ENCODE measurements at regions of chr2 and their contacts with region 1.

Region 1: GRCh38 chr2:177239932-177240630 is 24.4 kb downstream of the NFE2L2 start:
- DNase-seq: peak; percentile 28
- H3K4me3 Mint-ChIP-seq: peak overlapping the region; percentile 30
- H3K27ac Mint-ChIP-seq: peak overlapping the region; percentile 97
- H3K4me1 Mint-ChIP-seq: peaks cover 53% of the 10 kb centered on the region
- H3K27me3 Mint-ChIP-seq: no peaks in the 10 kb centered on the region
- CTCF ChIP-seq: no peak

Region 2: DNA sequence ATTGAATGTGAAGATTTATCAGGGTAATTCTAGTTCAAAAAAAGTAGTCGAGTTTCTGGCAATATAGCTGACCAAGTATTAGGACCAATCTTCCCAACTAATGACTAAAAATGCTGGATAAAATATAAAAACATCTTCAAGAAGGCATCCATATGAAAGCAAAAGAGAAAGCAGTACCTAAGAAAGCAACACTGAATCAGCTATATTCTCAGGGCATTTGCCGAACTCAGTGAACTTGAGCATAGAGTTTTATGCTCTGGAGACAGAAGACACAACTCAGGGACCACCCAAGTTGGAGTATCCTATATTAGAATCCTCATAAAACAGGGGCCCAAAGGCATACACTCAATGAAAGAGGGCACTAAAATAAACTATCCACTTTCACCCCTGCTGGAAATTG is 131.2 kb before region 1 on chr2:
- CTCF ChIA-PET with region 1: no interaction called
- POLR2A ChIA-PET with region 1: no interaction called
- intact Hi-C with region 1: no loop called
- DNase-seq: no peak
- H3K4me3 Mint-ChIP-seq: no peak overlapping the region
- H3K27ac Mint-ChIP-seq: no peak overlapping the region
- H3K4me1 Mint-ChIP-seq: no peaks in the 10 kb centered on the region
- H3K27me3 Mint-ChIP-seq: peaks cover 58% of the 10 kb centered on the region
- CTCF ChIP-seq: no peak

Region 3: GRCh38 chr2:177229448-177230242 is 10.4 kb before region 1 on chr2:
- CTCF ChIA-PET with region 1: interaction called, 3 read pairs
- POLR2A ChIA-PET with region 1: interaction called, 68 read pairs
- intact Hi-C with region 1: no loop called
- DNase-seq: no peak
- H3K4me3 Mint-ChIP-seq: no peak overlapping the region
- H3K27ac Mint-ChIP-seq: peak overlapping the region; percentile 35
- H3K4me1 Mint-ChIP-seq: peaks cover 21% of the 10 kb centered on the region
- H3K27me3 Mint-ChIP-seq: no peaks in the 10 kb centered on the region
- CTCF ChIP-seq: no peak

Region 4: DNA sequence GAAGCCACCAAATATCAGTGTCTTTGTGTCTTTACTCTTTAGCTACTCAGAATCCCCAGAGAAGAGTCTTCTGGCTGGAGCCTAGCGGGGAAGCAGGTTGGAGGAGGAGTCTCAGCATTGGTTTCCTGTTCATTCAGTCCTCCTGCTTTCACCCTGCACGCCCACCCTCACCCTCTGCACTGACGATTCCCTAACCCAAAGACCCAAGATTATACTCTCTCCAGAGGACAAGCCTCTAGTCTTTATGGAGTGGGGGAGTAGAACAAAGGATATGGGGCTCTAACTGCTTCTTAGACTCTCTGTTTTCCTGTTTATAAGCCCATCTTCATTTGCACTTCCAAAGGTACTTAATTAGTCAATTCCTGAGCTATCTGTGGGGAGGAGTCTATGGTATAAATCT is 491.3 kb after region 1 on chr2:
- CTCF ChIA-PET with region 1: no interaction called
- POLR2A ChIA-PET with region 1: no interaction called
- intact Hi-C with region 1: no loop called
- DNase-seq: no peak
- H3K4me3 Mint-ChIP-seq: no peak overlapping the region
- H3K27ac Mint-ChIP-seq: no peak overlapping the region
- H3K4me1 Mint-ChIP-seq: no peaks in the 10 kb centered on the region
- H3K27me3 Mint-ChIP-seq: peaks cover 56% of the 10 kb centered on the region
- CTCF ChIP-seq: no peak

Measured in MCF 10A (cell line).